Activated CD4-positive, alpha-beta memory T cell treated with anti-CD3 and anti-CD28 coated beads for 36 hours (primary cell): ENCODE measurements at regions of chr6 and their contacts with region 1.

Region 1: DNA sequence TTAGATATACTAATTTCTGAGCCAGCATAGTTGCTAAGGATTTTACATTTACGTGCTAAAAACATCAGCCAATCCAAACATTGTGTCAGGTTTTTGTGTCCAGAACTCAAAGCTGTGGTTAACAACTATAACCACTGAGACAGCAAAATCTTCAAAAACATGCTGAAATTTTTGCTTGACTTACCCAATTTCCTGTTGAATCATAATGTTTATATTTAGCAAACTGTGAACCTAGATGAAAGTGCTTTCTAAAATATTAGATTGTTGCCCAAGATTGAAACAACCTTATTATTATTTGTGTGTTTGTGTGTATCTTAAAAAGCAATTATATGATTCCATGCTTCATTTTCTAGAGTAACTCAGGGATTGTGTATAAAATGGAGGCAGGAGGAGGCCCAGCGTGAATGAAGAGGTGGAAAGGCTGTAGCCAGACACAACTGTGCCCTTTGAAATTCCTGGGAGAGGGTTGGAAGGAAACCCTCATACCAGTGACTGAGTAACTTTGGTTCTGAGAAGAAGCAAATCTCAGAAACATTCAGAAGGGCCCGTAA is 48.0 kb downstream of the ARMC2 start:
- DNase-seq: no peak
- H3K4me3 Mint-ChIP-seq: no peak overlapping the region
- H3K27ac Mint-ChIP-seq: peak overlapping the region; percentile 56
- H3K4me1 Mint-ChIP-seq: peaks cover 33% of the 10 kb centered on the region
- H3K27me3 Mint-ChIP-seq: no peaks in the 10 kb centered on the region

Region 2: GRCh38 chr6:108782179-108783041 is 113.8 kb before region 1 on chr6:
- CTCF ChIA-PET with region 1: interaction called, 7 read pairs
- POLR2A ChIA-PET with region 1: no interaction called
- intact Hi-C with region 1: loop called (anchors 1 kb)
- DNase-seq: peak; percentile 91
- H3K4me3 Mint-ChIP-seq: peak overlapping the region; percentile 73
- H3K27ac Mint-ChIP-seq: no peak overlapping the region
- H3K4me1 Mint-ChIP-seq: peaks cover 11% of the 10 kb centered on the region
- H3K27me3 Mint-ChIP-seq: no peaks in the 10 kb centered on the region

Region 3: GRCh38 chr6:108848116-108848868 is 47.9 kb before region 1 on chr6 and contains the start of gene ARMC2:
- CTCF ChIA-PET with region 1: interaction called, 12 read pairs
- POLR2A ChIA-PET with region 1: no interaction called
- intact Hi-C with region 1: no loop called
- DNase-seq: peak; percentile 93
- H3K4me3 Mint-ChIP-seq: peak within 1 kb of the TSS; percentile 83
- H3K27ac Mint-ChIP-seq: peak within 1 kb of the TSS; percentile 67
- H3K4me1 Mint-ChIP-seq: peaks cover 23% of the 10 kb centered on the region
- H3K27me3 Mint-ChIP-seq: no peaks in the 10 kb centered on the region
- total RNA-seq, gene ARMC2: 4.4 to 7.9 TPM

Region 4: GRCh38 chr6:108914235-108915022 is 18.2 kb after region 1 on chr6:
- CTCF ChIA-PET with region 1: interaction called, 16 read pairs
- POLR2A ChIA-PET with region 1: no interaction called
- intact Hi-C with region 1: no loop called
- DNase-seq: peak; percentile 66
- H3K4me3 Mint-ChIP-seq: no peak overlapping the region
- H3K27ac Mint-ChIP-seq: no peak overlapping the region
- H3K4me1 Mint-ChIP-seq: no peaks in the 10 kb centered on the region
- H3K27me3 Mint-ChIP-seq: no peaks in the 10 kb centered on the region